CD8-positive, alpha-beta T cell (primary cell): ENCODE measurements at regions of chr2 and their contacts with region 1.

Region 1: DNA sequence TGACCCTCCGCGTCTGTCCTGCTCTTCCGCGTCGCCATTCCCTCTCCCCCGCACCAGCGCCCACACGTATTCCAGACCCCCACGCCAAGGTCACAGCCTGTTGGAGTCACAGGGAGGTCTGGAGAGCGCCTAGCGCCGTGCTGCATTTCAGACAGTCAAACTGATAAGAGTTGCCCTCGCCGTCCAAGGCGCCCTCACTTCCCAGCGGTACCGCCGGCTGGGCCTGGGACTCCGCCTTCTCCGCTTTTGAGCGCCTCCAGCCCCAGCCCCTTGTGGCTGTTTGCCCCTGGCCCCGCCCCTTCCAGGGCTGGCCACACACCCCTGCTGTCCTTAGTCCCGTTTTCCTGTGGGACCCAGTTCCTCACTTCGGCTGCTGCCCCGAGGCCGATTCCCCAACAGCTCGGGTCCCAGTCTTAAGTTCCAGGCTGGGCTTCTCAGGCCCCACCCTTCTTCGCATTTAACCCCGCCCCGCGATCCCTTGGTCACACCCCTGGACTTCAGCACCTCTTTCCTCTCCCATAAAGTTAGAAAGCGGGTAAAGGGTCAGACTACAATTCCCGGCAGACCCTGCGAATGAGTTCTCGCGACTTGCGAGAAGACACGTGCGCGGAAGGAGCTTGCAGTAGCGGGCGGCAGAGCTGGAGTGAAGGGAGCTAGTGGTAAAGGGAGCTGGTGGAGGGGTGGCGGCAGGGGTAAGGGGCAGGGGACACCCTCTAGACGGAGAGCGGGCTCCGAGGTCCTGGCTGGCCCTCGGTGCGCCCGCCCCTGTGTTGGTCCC is at the start of gene GMPPA:
- DNase-seq: peak; percentile 82 to 95 (median 89)
- ATAC-seq: peak; percentile 90
- H3K4me3 ChIP-seq: peak within 1 kb of the TSS; percentile 75 to 83
- H3K4me3 Mint-ChIP-seq: peak within 1 kb of the TSS; percentile 89
- H3K27ac ChIP-seq: peak within 1 kb of the TSS; percentile 52 to 59
- H3K27ac Mint-ChIP-seq: peak within 1 kb of the TSS; percentile 84
- H3K4me1 ChIP-seq: peaks cover 39% of the 10 kb centered on the region
- H3K4me1 Mint-ChIP-seq: peaks cover 35% of the 10 kb centered on the region
- H3K27me3 ChIP-seq: peaks cover 25 to 34% of the 10 kb centered on the region in 2 experiments
- H3K27me3 Mint-ChIP-seq: peaks cover 33% of the 10 kb centered on the region
- CTCF ChIP-seq: no peak
- total RNA-seq, gene GMPPA: 9.4 to 15.0 TPM

Region 2: DNA sequence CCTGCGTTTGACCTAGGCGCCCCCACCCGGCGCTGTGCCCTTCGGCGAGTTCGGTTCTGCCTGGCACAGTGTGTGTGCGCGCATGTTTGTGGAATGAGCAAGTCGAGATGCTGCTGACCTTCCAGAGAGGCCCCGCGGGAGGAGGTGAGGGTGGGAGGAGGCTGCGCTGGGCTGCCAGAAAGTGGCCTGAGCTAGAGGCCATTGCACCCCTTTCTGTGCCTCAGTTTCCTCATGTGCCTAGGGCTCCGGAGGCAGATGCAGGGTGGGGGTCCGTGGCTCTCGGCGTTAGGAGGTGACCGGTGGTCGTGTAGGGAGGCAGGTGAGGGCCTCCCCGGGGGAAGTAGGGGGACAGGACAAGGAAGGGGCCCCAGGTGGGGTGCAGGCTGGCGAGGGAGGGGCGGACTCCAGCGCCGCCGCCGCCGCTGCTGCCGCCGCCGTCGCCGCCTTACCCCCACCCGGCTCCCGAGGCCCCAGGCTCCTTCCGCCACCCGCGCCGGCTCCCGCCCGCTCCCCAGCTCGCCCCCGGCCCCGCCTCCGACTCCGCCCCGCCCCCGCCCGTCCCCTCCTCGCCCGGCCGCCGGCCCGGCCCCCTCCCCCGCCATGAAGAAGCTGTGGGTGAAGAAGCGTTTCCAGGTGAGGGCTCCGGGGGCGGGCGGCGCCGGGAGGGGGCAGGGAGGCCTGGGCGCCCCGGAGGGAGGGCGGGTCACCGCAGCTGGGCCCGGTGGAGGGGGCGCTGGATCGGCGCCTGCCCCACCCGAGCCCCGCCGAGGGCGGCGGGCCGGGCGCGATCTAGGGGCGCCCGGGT is 56.8 kb before region 1 on chr2:
- CTCF ChIA-PET with region 1: no interaction called
- POLR2A ChIA-PET with region 1: no interaction called
- intact Hi-C with region 1: loop called in 1 of 2 experiments (anchors 5 kb)
- DNase-seq: peak in 8 of 9 experiments; percentile 33 to 76 (median 64)
- ATAC-seq: peak; percentile 80
- H3K4me3 ChIP-seq: peak overlapping the region; percentile 47 to 59
- H3K4me3 Mint-ChIP-seq: peak overlapping the region; percentile 71
- H3K27ac ChIP-seq: no peak overlapping the region
- H3K27ac Mint-ChIP-seq: no peak overlapping the region
- H3K4me1 ChIP-seq: peaks cover 12% of the 10 kb centered on the region
- H3K4me1 Mint-ChIP-seq: peaks cover 19% of the 10 kb centered on the region
- H3K27me3 ChIP-seq: peaks cover 0 to 4% of the 10 kb centered on the region in 2 experiments
- H3K27me3 Mint-ChIP-seq: peaks cover 4% of the 10 kb centered on the region
- CTCF ChIP-seq: no peak

Region 3: GRCh38 chr2:219509780-219510511 is 11.5 kb after region 1 on chr2:
- CTCF ChIA-PET with region 1: interaction called, 15 read pairs
- POLR2A ChIA-PET with region 1: interaction called, 7 read pairs
- intact Hi-C with region 1: no loop called
- DNase-seq: peak in 8 of 9 experiments; percentile 25 to 68 (median 54)
- ATAC-seq: peak; percentile 90
- H3K4me3 ChIP-seq: no peak overlapping the region
- H3K4me3 Mint-ChIP-seq: peak overlapping the region; percentile 26
- H3K27ac ChIP-seq: no peak overlapping the region
- H3K27ac Mint-ChIP-seq: no peak overlapping the region
- H3K4me1 ChIP-seq: peaks cover 26% of the 10 kb centered on the region
- H3K4me1 Mint-ChIP-seq: peaks cover 25% of the 10 kb centered on the region
- H3K27me3 ChIP-seq: peaks cover 22 to 35% of the 10 kb centered on the region in 2 experiments
- H3K27me3 Mint-ChIP-seq: peaks cover 53% of the 10 kb centered on the region
- CTCF ChIP-seq: peak; percentile 53

Region 4: DNA sequence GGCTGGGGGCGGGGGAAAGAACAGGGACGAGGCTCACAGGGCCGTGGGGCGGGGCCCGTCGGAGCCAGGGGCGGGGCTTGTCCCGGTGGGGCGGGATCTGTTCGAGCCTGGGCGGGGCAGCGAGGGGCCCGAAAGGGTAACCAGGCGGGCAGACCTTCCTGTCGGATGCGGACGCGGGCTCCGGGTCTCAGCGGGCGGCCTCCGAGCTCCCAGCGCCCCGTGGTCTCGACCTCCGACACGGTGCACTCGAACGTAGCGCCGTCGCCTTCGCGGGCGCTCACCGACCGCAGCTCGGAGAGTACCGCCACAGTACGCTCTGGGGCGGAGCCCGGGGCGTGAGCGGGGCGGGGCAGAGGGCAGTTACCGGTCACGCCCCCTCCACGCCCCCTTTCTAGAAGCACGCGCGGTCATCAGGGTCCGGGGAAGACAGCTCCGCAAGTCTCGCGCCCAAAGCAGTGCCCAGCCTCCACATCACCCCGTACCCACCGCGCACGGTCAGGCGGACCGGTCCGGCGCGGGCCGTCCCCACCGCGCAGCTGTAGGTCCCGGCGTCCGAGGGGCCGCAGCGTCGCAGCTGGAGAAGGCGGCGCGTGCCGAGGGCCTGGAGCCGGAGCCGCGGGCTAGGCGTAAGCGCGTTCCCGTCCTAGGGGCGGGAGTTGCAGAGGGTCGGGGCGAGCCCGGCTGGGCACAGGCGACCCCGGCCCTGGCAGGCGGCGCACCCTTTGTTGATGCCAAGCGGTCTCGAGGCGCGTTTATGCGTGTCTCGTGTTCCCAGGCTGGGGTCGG is 54.1 kb after region 1 on chr2:
- CTCF ChIA-PET with region 1: no interaction called
- POLR2A ChIA-PET with region 1: no interaction called
- intact Hi-C with region 1: loop called in 1 of 2 experiments (anchors 2 kb)
- DNase-seq: peak; percentile 58 to 89 (median 80)
- ATAC-seq: peak; percentile 90
- H3K4me3 ChIP-seq: peak overlapping the region; percentile 49 to 67
- H3K4me3 Mint-ChIP-seq: peak overlapping the region; percentile 79
- H3K27ac ChIP-seq: no peak overlapping the region
- H3K27ac Mint-ChIP-seq: no peak overlapping the region
- H3K4me1 ChIP-seq: peaks cover 17% of the 10 kb centered on the region
- H3K4me1 Mint-ChIP-seq: peaks cover 12% of the 10 kb centered on the region
- H3K27me3 ChIP-seq: peaks cover 18 to 22% of the 10 kb centered on the region in 2 experiments
- H3K27me3 Mint-ChIP-seq: peaks cover 49% of the 10 kb centered on the region
- CTCF ChIP-seq: no peak

Region 5: GRCh38 chr2:219642465-219643080 is 144.1 kb after region 1 on chr2:
- CTCF ChIA-PET with region 1: no interaction called
- POLR2A ChIA-PET with region 1: no interaction called
- intact Hi-C with region 1: loop called in 1 of 2 experiments (anchors 5 kb)
- DNase-seq: peak; percentile 76 to 95 (median 89)
- ATAC-seq: peak; percentile 100
- H3K4me3 ChIP-seq: no peak overlapping the region
- H3K4me3 Mint-ChIP-seq: no peak overlapping the region
- H3K27ac ChIP-seq: no peak overlapping the region
- H3K27ac Mint-ChIP-seq: no peak overlapping the region
- H3K4me1 ChIP-seq: no peaks in the 10 kb centered on the region
- H3K4me1 Mint-ChIP-seq: peaks cover 7% of the 10 kb centered on the region
- H3K27me3 ChIP-seq: peaks cover 0 to 1% of the 10 kb centered on the region in 2 experiments
- H3K27me3 Mint-ChIP-seq: peaks cover 33% of the 10 kb centered on the region
- CTCF ChIP-seq: peak; percentile 99

Region 6: GRCh38 chr2:219681694-219682300 is 183.3 kb after region 1 on chr2:
- CTCF ChIA-PET with region 1: no interaction called
- POLR2A ChIA-PET with region 1: no interaction called
- intact Hi-C with region 1: no loop called
- DNase-seq: no peak
- ATAC-seq: no peak
- H3K4me3 ChIP-seq: no peak overlapping the region
- H3K4me3 Mint-ChIP-seq: no peak overlapping the region
- H3K27ac ChIP-seq: no peak overlapping the region
- H3K27ac Mint-ChIP-seq: no peak overlapping the region
- H3K4me1 ChIP-seq: peaks cover 4% of the 10 kb centered on the region
- H3K4me1 Mint-ChIP-seq: peaks cover 13% of the 10 kb centered on the region
- H3K27me3 ChIP-seq: no peaks in the 10 kb centered on the region
- H3K27me3 Mint-ChIP-seq: peaks cover 16% of the 10 kb centered on the region
- CTCF ChIP-seq: no peak